ENCODE measurements at regions of chr9 and their contacts with region 1.

Region 1: GRCh38 chr9:69056191-69056815 is 20.8 kb downstream of the FXN start:
- DNase-seq: no peak
- ATAC-seq: no peak
- H3K4me3 Mint-ChIP-seq: no peak overlapping the region
- H3K27ac Mint-ChIP-seq: no peak overlapping the region
- H3K4me1 Mint-ChIP-seq: peaks cover 5% of the 10 kb centered on the region
- H3K27me3 Mint-ChIP-seq: no peaks in the 10 kb centered on the region
- CTCF ChIP-seq: no peak

Region 2: DNA sequence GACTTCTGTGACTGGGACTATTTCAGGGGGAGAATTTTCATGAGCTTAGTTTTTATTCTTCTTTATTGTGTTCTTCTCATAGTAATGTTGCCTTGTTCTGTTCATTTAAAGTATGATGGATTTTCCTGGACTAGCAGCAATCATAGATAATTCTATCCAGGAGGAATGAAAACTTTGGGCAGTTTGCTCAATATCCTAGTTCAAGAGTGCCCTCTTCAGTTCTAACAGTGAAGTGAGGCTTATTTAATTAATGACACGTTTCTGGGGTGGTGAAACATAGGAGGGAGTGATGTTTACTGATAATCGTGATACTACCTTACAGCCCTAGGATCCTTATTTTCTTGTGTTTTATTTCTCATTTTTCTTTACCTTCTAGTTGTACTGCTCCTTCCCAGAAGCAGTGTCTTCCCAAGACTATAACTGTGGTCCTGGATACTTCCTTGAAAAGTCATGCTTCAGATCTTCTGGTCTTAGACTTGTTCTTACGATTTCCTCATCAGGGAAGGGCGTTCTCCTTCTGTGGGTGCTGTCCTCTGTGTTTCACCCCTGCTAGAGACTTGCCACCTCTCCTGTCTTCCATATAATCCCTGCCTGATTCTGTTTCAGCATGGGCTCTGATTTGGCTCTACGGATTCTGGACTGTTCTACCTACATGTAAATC is 821.7 kb after region 1 on chr9:
- CTCF ChIA-PET with region 1: no interaction called
- POLR2A ChIA-PET with region 1: no interaction called
- intact Hi-C with region 1: loop called (anchors 1 kb)
- DNase-seq: no peak
- ATAC-seq: no peak
- H3K4me3 Mint-ChIP-seq: no peak overlapping the region
- H3K27ac Mint-ChIP-seq: no peak overlapping the region
- H3K4me1 Mint-ChIP-seq: no peaks in the 10 kb centered on the region
- H3K27me3 Mint-ChIP-seq: peaks cover 11% of the 10 kb centered on the region
- CTCF ChIP-seq: no peak

Region 3: DNA sequence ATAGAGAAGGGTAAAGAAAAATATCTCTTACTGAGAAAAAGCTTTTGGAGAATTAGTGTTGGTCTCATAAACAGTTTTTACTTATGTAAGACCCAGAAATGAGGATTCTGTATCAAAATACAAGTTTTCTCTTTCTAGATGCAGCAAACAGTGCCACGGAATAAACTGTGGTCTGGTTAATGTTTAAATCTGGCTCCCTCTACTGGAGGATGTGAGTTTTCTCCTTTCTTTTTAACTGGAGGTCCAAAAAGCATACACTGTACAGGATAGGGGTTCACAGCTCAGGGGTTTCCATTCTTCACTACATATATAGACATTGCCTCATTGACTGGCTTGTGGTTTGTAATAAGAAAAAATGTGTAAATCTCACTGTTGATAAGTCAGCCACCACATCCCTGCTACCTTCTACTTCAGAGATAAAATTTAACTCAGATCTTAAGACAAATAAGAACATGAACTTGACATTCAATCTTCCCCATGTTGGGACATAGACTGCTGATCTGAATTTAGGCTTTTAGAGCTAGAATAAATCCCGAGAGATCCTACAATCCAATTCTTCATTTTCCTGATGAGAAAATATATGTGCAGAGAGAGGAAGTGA is 863.3 kb after region 1 on chr9:
- CTCF ChIA-PET with region 1: no interaction called
- POLR2A ChIA-PET with region 1: no interaction called
- intact Hi-C with region 1: loop called (anchors 2 kb)
- DNase-seq: no peak
- ATAC-seq: peak; percentile 50
- H3K4me3 Mint-ChIP-seq: no peak overlapping the region
- H3K27ac Mint-ChIP-seq: no peak overlapping the region
- H3K4me1 Mint-ChIP-seq: no peaks in the 10 kb centered on the region
- H3K27me3 Mint-ChIP-seq: no peaks in the 10 kb centered on the region
- CTCF ChIP-seq: no peak